Mammary epithelial cell (primary cell): ENCODE measurements at regions of chr20 and their contacts with region 1.

Region 1: GRCh38 chr20:62395311-62396242 is 8.7 kb downstream of the RPS21 start:
- DNase-seq: no peak
- H3K4me3 ChIP-seq: no peak overlapping the region
- H3K27ac ChIP-seq: no peak overlapping the region
- H3K4me1 ChIP-seq: no peaks in the 10 kb centered on the region
- H3K27me3 ChIP-seq: no peaks in the 10 kb centered on the region
- CTCF ChIP-seq: no peak

Region 2: DNA sequence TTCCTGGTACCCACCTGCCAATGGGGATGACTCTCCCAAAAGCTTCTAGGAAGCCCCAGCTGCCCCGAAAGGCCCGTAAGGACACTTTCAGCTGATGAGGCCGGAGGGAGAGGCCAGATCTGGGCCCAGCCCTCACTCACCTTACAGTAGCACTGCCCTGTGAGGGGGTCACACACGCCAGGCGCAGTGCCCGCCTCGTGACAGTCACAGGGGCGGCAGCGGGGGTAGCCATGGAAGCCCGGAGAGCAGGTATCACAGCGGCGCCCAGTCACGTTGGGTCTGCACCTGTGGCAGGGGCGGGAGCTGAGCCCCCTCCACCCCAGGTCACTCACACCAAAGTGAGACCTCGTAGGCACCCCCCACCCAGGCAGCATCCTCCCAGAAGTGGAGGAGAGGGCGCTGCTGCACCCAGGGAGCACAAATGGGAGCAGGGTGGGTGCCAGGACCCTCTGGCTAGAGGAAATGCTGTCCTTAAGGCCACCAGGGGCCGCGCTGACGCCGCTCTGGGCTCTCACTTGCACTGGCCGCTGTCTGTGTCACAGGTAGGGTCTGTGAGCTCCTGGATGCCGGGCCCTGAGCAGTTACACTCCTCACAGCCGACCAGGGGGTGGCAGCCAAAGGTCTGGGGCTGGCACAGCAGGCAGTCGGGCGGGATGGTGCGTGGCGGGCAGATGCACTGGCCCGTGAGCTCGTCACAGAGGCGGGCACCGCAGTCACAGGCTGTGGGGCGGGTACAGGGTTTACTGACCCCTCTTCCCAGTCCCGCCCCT is 67.7 kb before region 1 on chr20:
- CTCF ChIA-PET with region 1: no interaction called
- dilution Hi-C with region 1: loop called (anchors 5 kb)
- in situ Hi-C with region 1: no loop called
- intact Hi-C with region 1: no loop called
- DNase-seq: no peak
- H3K4me3 ChIP-seq: no peak overlapping the region
- H3K27ac ChIP-seq: no peak overlapping the region
- H3K4me1 ChIP-seq: no peaks in the 10 kb centered on the region
- H3K27me3 ChIP-seq: no peaks in the 10 kb centered on the region
- CTCF ChIP-seq: no peak

Region 3: GRCh38 chr20:62357187-62357667 is 38.4 kb before region 1 on chr20:
- CTCF ChIA-PET with region 1: no interaction called
- dilution Hi-C with region 1: loop called (anchors 5 kb)
- in situ Hi-C with region 1: no loop called
- intact Hi-C with region 1: no loop called
- DNase-seq: peak; percentile 58
- H3K4me3 ChIP-seq: no peak overlapping the region
- H3K27ac ChIP-seq: no peak overlapping the region
- H3K4me1 ChIP-seq: peaks cover 87% of the 10 kb centered on the region
- H3K27me3 ChIP-seq: no peaks in the 10 kb centered on the region
- CTCF ChIP-seq: no peak